HCT116 (cell line): ENCODE measurements at regions of chr6 and their contacts with region 1.

Region 1: DNA sequence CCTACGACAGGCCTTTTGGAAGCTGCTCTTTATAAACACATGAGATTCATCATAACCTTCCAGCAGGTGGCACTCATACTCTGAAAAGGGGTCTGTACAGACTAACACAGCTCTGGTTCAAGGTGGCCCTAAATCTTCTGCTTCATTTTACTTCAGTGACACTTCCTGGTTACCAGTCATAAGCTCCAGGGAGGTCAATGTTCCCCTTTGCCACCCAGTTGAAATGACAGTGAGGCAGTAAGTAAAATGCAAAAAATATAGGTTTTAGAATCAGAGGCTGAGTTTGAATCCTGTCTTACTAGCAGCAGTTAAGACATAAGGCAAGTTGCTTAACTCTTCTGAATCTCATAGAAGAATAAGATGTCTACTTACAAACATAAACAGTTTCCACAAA is 132.8 kb downstream of the CDK19 start:
- DNase-seq: peak; percentile 77
- ATAC-seq: peak; percentile 99
- H3K4me3 ChIP-seq: no peak overlapping the region
- H3K27ac ChIP-seq: no peak overlapping the region
- H3K4me1 ChIP-seq: peaks cover 2 to 6% of the 10 kb centered on the region in 2 experiments; a peak in 3 of 4 replicates
- H3K27me3 ChIP-seq: no peaks in the 10 kb centered on the region
- CTCF ChIP-seq: peak; percentile 59 to 88 (median 80)
- POLR2A ChIP-seq: no peak
- RAD21 ChIP-seq: peak; percentile 96

Region 2: GRCh38 chr6:110738899-110739365 is 56.5 kb after region 1 on chr6:
- CTCF ChIA-PET with region 1: no interaction called
- POLR2A ChIA-PET with region 1: no interaction called
- RAD21 ChIA-PET with region 1: no interaction called
- intact Hi-C with region 1: no loop called
- DNase-seq: no peak
- ATAC-seq: no peak
- H3K4me3 ChIP-seq: no peak overlapping the region
- H3K27ac ChIP-seq: no peak overlapping the region
- H3K4me1 ChIP-seq: no peaks in the 10 kb centered on the region
- H3K27me3 ChIP-seq: no peaks in the 10 kb centered on the region
- CTCF ChIP-seq: no peak
- POLR2A ChIP-seq: no peak
- RAD21 ChIP-seq: no peak

Region 3: DNA sequence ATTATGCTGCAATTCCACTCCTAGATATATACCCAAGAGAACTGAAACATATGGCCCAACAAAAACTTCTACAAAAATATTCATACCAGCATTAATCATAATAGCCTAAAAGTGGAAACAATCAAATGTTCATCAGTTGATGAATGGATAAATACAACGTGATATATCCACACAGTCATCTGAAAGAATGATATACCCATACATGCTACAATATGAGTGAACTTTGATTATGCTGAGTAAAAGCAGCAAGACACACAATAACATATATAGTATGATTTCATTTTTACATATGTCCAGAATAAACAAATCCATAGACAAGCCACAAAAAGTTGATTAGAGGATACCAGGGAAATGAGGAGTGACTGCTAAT is 102.1 kb after region 1 on chr6:
- CTCF ChIA-PET with region 1: no interaction called
- POLR2A ChIA-PET with region 1: no interaction called
- RAD21 ChIA-PET with region 1: no interaction called
- intact Hi-C with region 1: no loop called
- DNase-seq: no peak
- ATAC-seq: no peak
- H3K4me3 ChIP-seq: no peak overlapping the region
- H3K27ac ChIP-seq: no peak overlapping the region
- H3K4me1 ChIP-seq: no peaks in the 10 kb centered on the region
- H3K27me3 ChIP-seq: no peaks in the 10 kb centered on the region
- CTCF ChIP-seq: no peak
- POLR2A ChIP-seq: no peak
- RAD21 ChIP-seq: no peak

Region 4: DNA sequence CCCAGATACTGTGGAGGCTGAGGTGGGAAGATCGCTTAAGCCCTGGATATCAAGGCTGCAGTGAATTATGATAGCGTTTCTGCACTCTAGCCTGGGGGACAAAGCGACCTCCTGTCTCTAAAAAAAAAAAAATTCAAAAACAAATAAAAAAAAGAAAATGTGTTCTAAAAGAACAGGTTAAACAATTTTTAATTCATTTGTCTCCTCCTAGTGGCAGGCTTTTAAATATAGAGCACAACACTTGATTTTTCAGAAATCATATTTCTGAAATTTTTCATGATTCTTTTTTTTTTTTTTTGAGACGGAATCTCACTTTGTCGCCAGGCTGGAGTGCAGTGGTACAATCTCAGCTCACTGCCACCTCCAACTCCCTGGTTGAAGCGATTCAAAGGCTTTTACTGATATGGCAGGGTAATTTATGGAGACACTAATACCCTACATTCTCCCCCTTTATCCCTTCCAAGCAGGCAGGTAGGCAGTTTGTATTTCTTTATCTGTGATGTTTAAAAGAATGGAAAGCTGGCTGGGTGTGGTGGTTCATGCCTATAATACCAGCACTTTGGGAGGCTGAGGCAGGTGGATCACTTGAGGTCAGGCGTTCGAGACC is 267.3 kb after region 1 on chr6:
- CTCF ChIA-PET with region 1: interaction called, 16 read pairs
- POLR2A ChIA-PET with region 1: no interaction called
- RAD21 ChIA-PET with region 1: interaction called, 4 read pairs
- intact Hi-C with region 1: loop called (anchors 1 kb)
- DNase-seq: peak; percentile 12
- ATAC-seq: peak; percentile 45; the same call in 1 of the 2 replicates
- H3K4me3 ChIP-seq: no peak overlapping the region
- H3K27ac ChIP-seq: no peak overlapping the region
- H3K4me1 ChIP-seq: peaks cover 4 to 10% of the 10 kb centered on the region in 2 experiments
- H3K27me3 ChIP-seq: no peaks in the 10 kb centered on the region
- CTCF ChIP-seq: peak in 2 of 3 experiments; percentile 58 to 77; a peak in 5 of 6 replicates
- POLR2A ChIP-seq: no peak
- RAD21 ChIP-seq: peak; percentile 81

Region 5: GRCh38 chr6:110999634-111000270 is 317.3 kb after region 1 on chr6:
- CTCF ChIA-PET with region 1: interaction called, 5 read pairs
- POLR2A ChIA-PET with region 1: interaction called, 3 read pairs
- RAD21 ChIA-PET with region 1: interaction called in 1 of 2 experiments, 3 read pairs
- intact Hi-C with region 1: loop called (anchors 2 kb)
- DNase-seq: no peak
- ATAC-seq: peak; percentile 36; the same call in 1 of the 2 replicates
- H3K4me3 ChIP-seq: no peak overlapping the region
- H3K27ac ChIP-seq: no peak overlapping the region
- H3K4me1 ChIP-seq: no peaks in the 10 kb centered on the region
- H3K27me3 ChIP-seq: no peaks in the 10 kb centered on the region
- CTCF ChIP-seq: peak in 2 of 3 experiments; percentile 51 to 57; a peak in 2 of 6 replicates
- POLR2A ChIP-seq: no peak
- RAD21 ChIP-seq: peak; percentile 67